ENCODE measurements at regions of chr3 and their contacts with region 1.

Region 1: DNA sequence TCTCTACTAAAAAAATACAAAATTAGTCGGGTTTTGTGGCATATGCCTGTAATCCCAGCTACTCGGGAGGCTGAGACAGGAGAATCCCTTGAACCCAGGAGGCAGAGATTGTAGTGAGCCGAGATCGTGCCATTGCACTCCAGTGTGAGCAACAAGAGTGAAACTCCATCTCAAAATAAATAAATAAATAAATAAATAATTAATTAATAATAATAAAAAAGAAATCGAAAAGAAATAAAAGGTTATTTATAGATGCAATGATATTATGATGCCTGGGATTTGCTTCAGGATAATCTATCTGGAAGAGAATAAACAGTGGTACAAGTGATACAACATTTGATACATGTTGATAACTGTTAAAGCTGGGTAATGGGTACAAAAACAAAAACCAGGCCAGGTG is 58.6 kb downstream of the SOX2 start:
- DNase-seq: no peak
- ATAC-seq: no peak
- H3K4me3 Mint-ChIP-seq: no peak overlapping the region
- H3K27ac Mint-ChIP-seq: no peak overlapping the region
- H3K4me1 Mint-ChIP-seq: no peaks in the 10 kb centered on the region
- H3K27me3 Mint-ChIP-seq: peaks cover 2% of the 10 kb centered on the region

Region 2: DNA sequence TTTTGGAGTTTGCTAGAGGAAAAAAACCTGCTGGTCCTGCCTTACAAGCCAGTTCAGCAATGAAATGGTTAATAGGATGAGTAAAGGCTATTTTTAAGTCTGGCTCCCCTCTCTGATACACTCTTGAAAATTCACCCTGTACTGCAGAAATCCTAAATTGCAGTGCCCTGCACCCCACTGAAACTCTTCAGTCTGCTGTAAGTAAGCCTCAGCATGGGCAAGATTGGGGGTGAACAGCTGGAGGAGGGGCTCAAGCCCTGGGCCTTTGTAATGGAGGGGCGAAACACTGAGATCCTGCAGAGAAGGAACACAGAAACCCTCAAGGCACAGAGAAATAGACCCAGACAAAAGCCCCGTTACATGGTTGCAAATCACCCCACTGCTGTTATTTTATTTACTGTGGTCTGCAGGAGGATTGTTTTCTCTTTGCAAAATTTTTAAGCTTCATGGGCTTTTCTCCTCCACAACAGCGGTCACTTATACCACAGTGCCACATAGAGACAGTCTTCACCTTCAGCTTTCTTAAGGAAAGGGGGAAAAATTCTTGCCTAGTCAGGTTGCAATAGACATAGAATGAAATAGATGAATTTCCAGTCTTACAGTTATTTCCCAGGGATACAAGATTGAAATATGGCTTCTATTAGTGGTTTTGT is 13.5 kb before region 1 on chr3:
- CTCF ChIA-PET with region 1: no interaction called
- POLR2A ChIA-PET with region 1: interaction called, 11 read pairs
- intact Hi-C with region 1: no loop called
- DNase-seq: no peak
- ATAC-seq: no peak
- H3K4me3 Mint-ChIP-seq: no peak overlapping the region
- H3K27ac Mint-ChIP-seq: no peak overlapping the region
- H3K4me1 Mint-ChIP-seq: no peaks in the 10 kb centered on the region
- H3K27me3 Mint-ChIP-seq: peaks cover 7% of the 10 kb centered on the region

Region 3: GRCh38 chr3:182420731-182421130 is 650.4 kb after region 1 on chr3:
- CTCF ChIA-PET with region 1: no interaction called
- POLR2A ChIA-PET with region 1: no interaction called
- intact Hi-C with region 1: no loop called
- DNase-seq: no peak
- ATAC-seq: no peak
- H3K4me3 Mint-ChIP-seq: no peak overlapping the region
- H3K27ac Mint-ChIP-seq: no peak overlapping the region
- H3K4me1 Mint-ChIP-seq: no peaks in the 10 kb centered on the region
- H3K27me3 Mint-ChIP-seq: no peaks in the 10 kb centered on the region

Measured in activated CD4-positive, alpha-beta T cell treated with anti-CD3 and anti-CD28 coated beads for 36 hours (primary cell).